PC-9 (cell line): ENCODE measurements at regions of chr6 and their contacts with region 1.

Region 1: DNA sequence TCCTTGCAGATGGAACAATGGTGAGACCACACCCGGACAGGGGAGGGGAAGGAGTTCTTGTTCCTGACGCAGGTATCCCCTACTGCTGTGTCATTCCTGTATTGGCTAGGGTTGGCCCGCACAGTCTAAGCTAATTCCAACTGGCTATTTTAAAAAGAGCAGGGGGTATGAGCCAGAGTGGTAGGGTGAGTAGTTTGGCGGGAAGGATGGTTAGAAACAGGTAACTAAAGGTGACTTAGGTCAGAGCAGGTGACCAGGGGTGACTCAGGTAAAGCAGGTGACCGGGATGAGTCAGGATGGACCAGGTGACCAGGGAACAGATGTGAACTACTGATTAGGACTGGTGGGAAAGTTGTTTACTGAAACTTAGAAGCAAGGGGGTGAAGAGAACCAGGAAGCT is 58.0 kb downstream of the ZNF292 start:
- DNase-seq: peak; percentile 71 to 83
- H3K4me3 ChIP-seq: no peak overlapping the region
- H3K27ac ChIP-seq: peak overlapping the region; percentile 93
- H3K4me1 ChIP-seq: peaks cover 24% of the 10 kb centered on the region
- H3K27me3 ChIP-seq: no peaks in the 10 kb centered on the region
- CTCF ChIP-seq: no peak

Region 2: DNA sequence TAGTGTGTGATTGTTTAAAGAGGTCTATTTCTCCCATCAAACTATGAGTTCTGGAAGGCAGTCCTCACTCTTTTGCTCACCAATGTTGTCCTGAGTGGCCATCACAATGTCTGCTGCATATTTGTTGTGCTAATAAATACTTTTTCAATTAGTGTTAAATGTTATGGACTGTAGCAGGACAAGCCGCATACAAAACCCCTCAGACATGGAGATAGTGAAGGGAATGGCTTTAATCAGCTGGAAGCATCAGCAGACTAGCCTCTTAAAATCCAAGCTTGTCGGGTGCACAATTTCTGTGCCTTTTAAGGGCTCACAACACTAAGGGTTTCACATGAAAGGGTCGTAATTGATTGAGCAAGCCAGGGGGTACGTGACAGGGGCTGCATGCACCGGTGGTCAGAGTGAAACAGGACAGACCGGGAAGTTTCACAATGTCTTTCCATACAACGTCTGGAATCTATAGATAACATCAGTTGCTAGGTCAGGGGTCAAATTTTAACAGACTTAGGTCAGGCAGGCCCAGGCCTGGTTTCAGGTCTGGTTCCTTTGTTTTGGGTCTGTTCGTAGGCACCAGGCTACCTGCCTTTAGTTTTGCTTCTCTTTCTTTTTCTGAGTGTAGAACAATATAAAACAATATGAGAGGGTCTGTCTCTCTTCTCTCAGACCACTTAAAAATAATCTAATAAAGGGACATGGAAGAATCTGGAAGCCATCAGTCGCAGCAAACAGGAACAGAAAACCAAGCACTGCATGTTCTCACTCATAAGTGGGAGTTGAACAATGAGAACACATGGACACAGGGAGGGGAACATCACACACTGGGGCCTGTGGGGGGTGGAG is 603.6 kb before region 1 on chr6:
- CTCF ChIA-PET with region 1: no interaction called
- POLR2A ChIA-PET with region 1: no interaction called
- intact Hi-C with region 1: no loop called
- DNase-seq: no peak
- H3K4me3 ChIP-seq: no peak overlapping the region
- H3K27ac ChIP-seq: no peak overlapping the region
- H3K4me1 ChIP-seq: no peaks in the 10 kb centered on the region
- H3K27me3 ChIP-seq: no peaks in the 10 kb centered on the region
- CTCF ChIP-seq: no peak

Region 3: DNA sequence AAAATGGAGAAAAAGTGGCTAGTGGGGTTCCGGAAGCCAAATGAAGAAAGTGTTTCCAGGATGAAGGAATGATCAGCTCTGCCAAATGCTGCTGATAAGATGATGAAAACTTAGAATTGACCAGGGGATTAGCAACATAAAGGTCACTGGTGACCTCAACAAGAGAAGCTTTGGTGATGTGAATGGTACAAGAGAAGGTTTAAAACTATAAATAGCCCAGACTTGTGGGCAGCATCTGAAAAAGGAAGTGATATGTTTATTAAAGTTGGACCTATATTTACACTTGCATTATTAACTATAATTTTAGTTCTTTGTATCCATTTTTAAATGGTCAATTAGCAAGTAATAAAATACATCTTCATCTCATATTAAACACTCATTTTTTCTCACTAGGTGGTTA is 163.6 kb before region 1 on chr6:
- CTCF ChIA-PET with region 1: no interaction called
- POLR2A ChIA-PET with region 1: no interaction called
- intact Hi-C with region 1: no loop called
- DNase-seq: no peak
- H3K4me3 ChIP-seq: no peak overlapping the region
- H3K27ac ChIP-seq: no peak overlapping the region
- H3K4me1 ChIP-seq: no peaks in the 10 kb centered on the region
- H3K27me3 ChIP-seq: no peaks in the 10 kb centered on the region
- CTCF ChIP-seq: no peak

Region 4: DNA sequence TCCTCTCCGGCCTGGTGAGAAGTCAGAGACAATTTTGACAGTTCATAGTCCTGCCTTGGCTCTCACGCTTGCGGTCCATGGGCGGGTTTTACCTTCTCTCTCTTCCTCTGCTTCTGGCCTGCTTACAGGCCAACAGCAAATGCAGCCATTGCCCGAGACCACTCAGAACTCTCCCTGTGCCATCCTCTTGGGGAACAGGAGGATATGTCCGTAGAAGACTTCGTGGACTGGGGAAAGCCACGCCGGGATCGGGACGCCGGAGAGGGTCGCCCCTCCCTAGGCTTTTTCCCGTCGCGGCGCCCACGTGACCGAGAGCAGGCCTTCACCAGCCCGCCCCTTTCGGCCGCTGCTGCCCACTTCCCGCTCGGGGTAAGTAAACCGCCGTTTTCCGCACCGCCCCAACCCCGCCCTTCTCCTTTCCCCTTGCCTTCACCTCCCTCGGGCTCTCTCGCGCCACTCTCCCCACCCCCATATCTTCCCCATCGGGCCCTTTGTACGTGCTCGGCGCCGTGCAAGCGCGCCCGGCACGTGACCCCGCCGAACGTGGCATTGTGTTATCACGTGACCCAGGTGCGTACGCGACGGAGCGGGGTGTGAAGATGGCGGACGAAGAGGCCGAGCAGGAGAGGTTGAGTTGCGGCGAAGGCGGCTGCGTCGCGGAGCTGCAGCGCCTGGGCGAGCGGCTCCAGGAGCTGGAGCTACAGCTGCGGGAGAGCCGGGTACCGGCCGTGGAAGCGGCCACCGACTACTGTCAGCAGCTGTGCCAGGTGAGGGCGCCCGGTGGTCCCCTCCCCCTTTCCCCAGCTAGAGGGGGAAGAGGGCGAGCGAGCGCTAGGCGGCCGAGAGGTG is 58.1 kb before region 1 on chr6 and contains the start of gene ZNF292:
- CTCF ChIA-PET with region 1: no interaction called
- POLR2A ChIA-PET with region 1: no interaction called
- intact Hi-C with region 1: loop called (anchors 1 kb)
- DNase-seq: peak; percentile 82 to 95
- H3K4me3 ChIP-seq: peak within 1 kb of the TSS; percentile 58
- H3K27ac ChIP-seq: peak within 1 kb of the TSS; percentile 51
- H3K4me1 ChIP-seq: peaks cover 17% of the 10 kb centered on the region
- H3K27me3 ChIP-seq: no peaks in the 10 kb centered on the region
- CTCF ChIP-seq: no peak
- total RNA-seq, gene ZNF292: 29.2 and 34.1 TPM in 2 replicates